Lower leg skin (tissue), 4 donors: ENCODE measurements at regions of chr5 and their contacts with region 1.

Region 1: GRCh38 chr5:141849375-141850243 is 28.6 kb downstream of the PCDH1 start:
- DNase-seq: peak; percentile 84 to 97
- H3K4me3 ChIP-seq: peak overlapping the region; percentile 55
- CTCF ChIP-seq: no peak
- POLR2A ChIP-seq: peak in 1 of 2 donors; percentile 28

Region 2: DNA sequence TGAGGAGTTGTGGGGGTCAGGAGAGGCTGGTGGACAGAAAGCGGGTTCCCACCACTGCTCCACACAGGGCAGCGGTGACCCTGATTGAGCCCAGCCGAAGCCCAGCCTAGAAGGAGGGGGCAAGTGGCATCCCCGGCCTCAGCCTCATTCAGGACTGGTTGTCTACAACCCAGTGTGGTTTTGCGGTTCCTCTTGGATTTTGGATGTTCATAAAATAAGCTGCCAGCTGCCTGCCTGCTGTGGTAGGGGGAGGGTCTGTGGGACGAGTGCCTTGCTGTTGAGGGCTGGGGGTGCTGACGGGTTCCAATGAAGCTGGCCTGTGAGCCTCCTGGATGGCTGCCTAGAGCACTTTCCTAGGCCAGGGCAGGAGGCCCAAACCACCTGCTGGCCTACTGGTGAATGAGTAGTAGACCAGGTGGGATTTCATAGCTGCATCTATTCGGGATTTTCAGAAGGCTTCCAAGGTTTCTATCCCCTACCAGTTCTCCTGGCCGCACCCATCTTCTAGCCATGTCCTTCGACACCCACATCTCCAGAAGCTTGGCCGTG is 361.3 kb after region 1 on chr5:
- intact Hi-C with region 1: loop called (anchors 5 kb)
- DNase-seq: no peak
- H3K4me3 ChIP-seq: no peak overlapping the region
- CTCF ChIP-seq: no peak
- POLR2A ChIP-seq: no peak

Region 3: GRCh38 chr5:142784401-142784955 is 934.9 kb after region 1 on chr5:
- intact Hi-C with region 1: no loop called
- DNase-seq: no peak
- H3K4me3 ChIP-seq: no peak overlapping the region
- CTCF ChIP-seq: no peak
- POLR2A ChIP-seq: no peak